B cell (primary cell): ENCODE measurements at regions of chr10 and their contacts with region 1.

Region 1: GRCh38 chr10:109978481-109978880 is 29.3 kb upstream of the ADD3 start:
- DNase-seq: peak; percentile 68
- ATAC-seq: no peak
- H3K4me3 ChIP-seq: no peak overlapping the region
- H3K4me3 Mint-ChIP-seq: no peak overlapping the region
- H3K27ac ChIP-seq: no peak overlapping the region
- H3K27ac Mint-ChIP-seq: no peak overlapping the region
- H3K4me1 ChIP-seq: no peaks in the 10 kb centered on the region
- H3K4me1 Mint-ChIP-seq: no peaks in the 10 kb centered on the region
- H3K27me3 ChIP-seq: no peaks in the 10 kb centered on the region
- H3K27me3 Mint-ChIP-seq: no peaks in the 10 kb centered on the region
- CTCF ChIP-seq: peak; percentile 90

Region 2: GRCh38 chr10:109914966-109915365 is 63.5 kb before region 1 on chr10:
- CTCF ChIA-PET with region 1: no interaction called
- POLR2A ChIA-PET with region 1: no interaction called
- intact Hi-C with region 1: no loop called
- DNase-seq: peak; percentile 24
- ATAC-seq: peak; percentile 53
- H3K4me3 ChIP-seq: no peak overlapping the region
- H3K4me3 Mint-ChIP-seq: peak overlapping the region; percentile 28
- H3K27ac ChIP-seq: no peak overlapping the region
- H3K27ac Mint-ChIP-seq: peak overlapping the region; percentile 4
- H3K4me1 ChIP-seq: peaks cover 53 to 54% of the 10 kb centered on the region in 2 donors
- H3K4me1 Mint-ChIP-seq: peaks cover 70% of the 10 kb centered on the region
- H3K27me3 ChIP-seq: no peaks in the 10 kb centered on the region
- H3K27me3 Mint-ChIP-seq: no peaks in the 10 kb centered on the region
- CTCF ChIP-seq: no peak

Region 3: DNA sequence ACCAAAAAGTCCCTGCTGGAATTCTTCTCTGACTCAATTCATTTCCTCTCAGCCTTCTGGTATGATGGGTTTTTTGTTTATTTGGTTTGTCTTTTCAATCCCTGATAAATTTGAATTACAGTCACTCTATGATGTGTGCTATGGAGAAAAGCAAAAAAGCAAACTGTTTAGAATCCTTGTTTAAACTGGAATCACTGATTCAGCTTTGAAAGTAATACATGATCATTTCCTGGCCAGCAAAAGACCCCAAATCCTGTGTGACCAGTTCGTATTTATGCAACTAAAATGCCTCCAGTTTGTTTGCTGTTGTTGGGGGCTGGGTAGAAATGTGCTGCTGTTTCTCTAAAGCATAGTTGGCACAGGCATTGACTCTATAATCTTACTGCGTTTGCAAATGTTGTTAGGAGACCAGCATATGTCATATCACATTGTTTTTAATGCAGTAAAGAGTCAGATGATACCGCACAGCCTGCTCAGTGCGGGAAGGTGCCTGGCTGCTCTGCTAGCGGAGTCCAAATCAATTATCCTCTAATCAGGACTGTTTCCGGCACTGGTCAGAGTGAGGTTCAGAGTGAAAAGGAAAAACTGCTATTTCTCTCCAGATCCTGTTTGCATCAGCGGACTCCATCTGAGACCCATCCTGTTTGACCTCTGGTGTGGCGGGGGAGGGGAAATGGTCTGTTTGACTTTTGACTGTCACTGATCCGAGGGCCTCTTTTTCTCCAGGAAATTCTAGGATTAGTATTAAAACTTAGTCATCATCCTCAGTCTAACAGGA is 11.3 kb before region 1 on chr10:
- CTCF ChIA-PET with region 1: interaction called, 13 read pairs
- POLR2A ChIA-PET with region 1: interaction called, 4 read pairs
- intact Hi-C with region 1: no loop called
- DNase-seq: no peak
- ATAC-seq: no peak
- H3K4me3 ChIP-seq: no peak overlapping the region
- H3K4me3 Mint-ChIP-seq: no peak overlapping the region
- H3K27ac ChIP-seq: no peak overlapping the region
- H3K27ac Mint-ChIP-seq: no peak overlapping the region
- H3K4me1 ChIP-seq: no peaks in the 10 kb centered on the region
- H3K4me1 Mint-ChIP-seq: no peaks in the 10 kb centered on the region
- H3K27me3 ChIP-seq: peaks cover 0 to 5% (median 0%) of the 10 kb centered on the region in 4 experiments
- H3K27me3 Mint-ChIP-seq: no peaks in the 10 kb centered on the region
- CTCF ChIP-seq: no peak

Region 4: GRCh38 chr10:109996225-109996624 is 17.7 kb after region 1 on chr10:
- CTCF ChIA-PET with region 1: interaction called, 12 read pairs
- POLR2A ChIA-PET with region 1: no interaction called
- intact Hi-C with region 1: no loop called
- DNase-seq: peak; percentile 26
- ATAC-seq: no peak
- H3K4me3 ChIP-seq: peak overlapping the region in 2 of 5 experiments; percentile 6 to 42
- H3K4me3 Mint-ChIP-seq: peak overlapping the region; percentile 63
- H3K27ac ChIP-seq: peak overlapping the region in 1 of 2 donors; percentile 62
- H3K27ac Mint-ChIP-seq: peak overlapping the region; percentile 72
- H3K4me1 ChIP-seq: peaks cover 36 to 39% of the 10 kb centered on the region in 2 donors
- H3K4me1 Mint-ChIP-seq: peaks cover 48% of the 10 kb centered on the region
- H3K27me3 ChIP-seq: no peaks in the 10 kb centered on the region
- H3K27me3 Mint-ChIP-seq: no peaks in the 10 kb centered on the region
- CTCF ChIP-seq: no peak

Region 5: DNA sequence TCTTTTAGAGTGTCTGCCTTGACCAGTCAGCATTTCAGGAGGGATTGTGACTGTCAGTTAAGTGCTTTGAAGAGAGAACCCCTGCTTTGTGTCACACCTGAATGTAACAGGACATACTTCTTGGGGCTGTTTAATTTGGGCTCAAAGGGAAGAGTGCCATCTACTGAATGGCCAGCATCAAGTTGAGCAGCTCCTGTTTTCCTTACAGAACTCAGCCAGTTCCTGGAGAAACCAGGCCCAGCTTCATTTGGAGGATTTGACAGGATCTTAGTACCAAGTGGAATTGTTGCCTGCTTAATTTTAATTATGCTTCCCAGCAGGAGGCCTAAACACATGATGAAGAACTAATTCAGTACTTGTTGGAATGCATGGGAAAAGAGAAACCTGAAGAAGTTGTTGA is 37.6 kb after region 1 on chr10:
- CTCF ChIA-PET with region 1: interaction called, 18 read pairs
- POLR2A ChIA-PET with region 1: no interaction called
- intact Hi-C with region 1: no loop called
- DNase-seq: no peak
- ATAC-seq: no peak
- H3K4me3 ChIP-seq: no peak overlapping the region
- H3K4me3 Mint-ChIP-seq: no peak overlapping the region
- H3K27ac ChIP-seq: no peak overlapping the region
- H3K27ac Mint-ChIP-seq: no peak overlapping the region
- H3K4me1 ChIP-seq: peaks cover 32 to 36% of the 10 kb centered on the region in 2 donors
- H3K4me1 Mint-ChIP-seq: peaks cover 67% of the 10 kb centered on the region
- H3K27me3 ChIP-seq: no peaks in the 10 kb centered on the region
- H3K27me3 Mint-ChIP-seq: no peaks in the 10 kb centered on the region
- CTCF ChIP-seq: no peak